ENCODE measurements at regions of chr12 and their contacts with region 1.

Region 1: GRCh38 chr12:106357549-106358395 is at the start of gene POLR3B:
- DNase-seq: peak; percentile 84 to 92
- H3K4me3 ChIP-seq: peak within 1 kb of the TSS; percentile 66
- H3K27ac ChIP-seq: peak within 1 kb of the TSS; percentile 95
- H3K4me1 ChIP-seq: peaks cover 30% of the 10 kb centered on the region
- H3K27me3 ChIP-seq: no peaks in the 10 kb centered on the region
- CTCF ChIP-seq: peak; percentile 88
- total RNA-seq, gene POLR3B: 8.4 and 12.9 TPM in 2 replicates

Region 2: GRCh38 chr12:106066051-106066705 is 291.6 kb before region 1 on chr12:
- CTCF ChIA-PET with region 1: no interaction called
- POLR2A ChIA-PET with region 1: no interaction called
- intact Hi-C with region 1: no loop called
- DNase-seq: no peak
- H3K4me3 ChIP-seq: no peak overlapping the region
- H3K27ac ChIP-seq: no peak overlapping the region
- H3K4me1 ChIP-seq: no peaks in the 10 kb centered on the region
- H3K27me3 ChIP-seq: no peaks in the 10 kb centered on the region
- CTCF ChIP-seq: no peak

Region 3: DNA sequence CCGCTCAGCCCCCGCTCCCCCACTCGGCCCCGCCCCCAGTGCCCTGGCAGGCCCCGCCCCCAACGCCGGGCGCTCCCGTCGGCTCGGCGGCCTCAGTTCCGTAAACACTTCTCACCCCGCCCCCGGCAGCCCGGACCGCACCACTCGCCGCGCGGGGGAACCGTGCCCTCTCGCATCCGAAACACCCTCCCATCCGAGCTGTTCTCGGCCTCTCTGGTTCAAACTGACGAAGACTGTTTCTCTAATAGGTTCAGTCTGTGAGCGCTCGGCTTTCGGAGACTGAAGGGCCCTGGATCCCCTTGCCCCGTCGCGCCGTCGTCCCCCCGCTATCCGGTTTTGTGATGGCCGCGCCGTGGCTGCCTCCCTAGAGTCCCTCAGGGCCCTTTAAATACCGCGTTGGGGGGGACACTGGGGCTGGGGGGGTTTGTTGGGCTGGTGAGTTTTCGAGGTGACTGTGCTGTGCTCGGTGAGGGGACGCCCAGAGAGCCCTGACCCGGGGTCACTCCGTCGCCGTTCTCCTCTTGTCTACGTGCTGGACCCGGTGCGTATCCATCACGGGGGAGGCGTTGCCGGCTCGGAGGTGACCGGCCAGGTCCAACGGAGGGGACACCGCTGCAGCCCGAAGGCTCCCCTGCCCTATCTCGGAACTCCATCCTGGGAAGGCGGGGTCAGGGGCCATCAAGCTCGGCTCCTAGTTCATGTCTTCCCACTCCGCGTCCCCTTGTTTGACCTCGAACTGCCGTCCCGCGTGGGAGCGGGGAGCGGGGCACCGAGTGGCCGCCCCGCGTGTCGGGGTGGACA is 55.2 kb before region 1 on chr12 and contains the start of gene TCP11L2:
- CTCF ChIA-PET with region 1: no interaction called
- POLR2A ChIA-PET with region 1: interaction called, 4 read pairs
- intact Hi-C with region 1: loop called (anchors 1 kb)
- DNase-seq: peak; percentile 59 to 79
- H3K4me3 ChIP-seq: peak within 1 kb of the TSS; percentile 99
- H3K27ac ChIP-seq: peak within 1 kb of the TSS; percentile 96
- H3K4me1 ChIP-seq: peaks cover 66% of the 10 kb centered on the region
- H3K27me3 ChIP-seq: no peaks in the 10 kb centered on the region
- CTCF ChIP-seq: no peak
- total RNA-seq, gene TCP11L2: 34.6 and 35.1 TPM in 2 replicates

Region 4: DNA sequence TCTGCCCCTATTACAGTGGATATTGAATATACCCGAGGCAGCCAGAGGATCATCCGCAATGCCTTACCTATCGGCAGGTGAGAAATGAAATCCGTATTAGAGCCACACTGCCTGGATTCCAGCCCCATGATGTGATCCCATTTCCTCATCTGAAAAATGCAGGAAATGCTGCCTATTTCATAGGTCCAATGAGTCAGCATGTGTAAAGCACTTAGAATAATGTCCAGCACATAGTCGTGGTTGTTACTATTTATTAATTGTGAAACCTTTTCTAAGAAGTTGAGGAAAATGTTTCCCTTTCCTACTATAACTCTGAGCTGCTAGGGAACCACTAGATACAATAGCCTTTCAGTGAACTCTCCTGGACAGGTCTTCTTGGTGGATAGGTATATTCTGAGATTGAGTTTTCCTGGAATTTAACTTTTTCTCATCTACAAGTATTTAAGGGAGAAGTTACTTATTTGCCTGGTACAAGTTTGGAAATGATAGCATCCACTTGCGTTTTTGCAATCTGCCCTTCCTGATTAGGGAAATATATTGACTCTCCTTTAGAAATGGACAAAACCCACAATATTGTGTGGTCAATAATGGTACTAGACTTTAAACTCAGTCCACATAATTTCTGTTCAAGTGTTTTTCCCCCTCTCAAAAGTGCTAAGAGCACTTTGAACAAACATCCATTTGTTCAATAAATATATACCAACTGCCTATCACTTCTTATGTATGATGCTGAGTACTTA is 12.0 kb after region 1 on chr12:
- CTCF ChIA-PET with region 1: no interaction called
- POLR2A ChIA-PET with region 1: no interaction called
- intact Hi-C with region 1: loop called (anchors 1 kb)
- DNase-seq: peak; percentile 42 to 97
- H3K4me3 ChIP-seq: peak overlapping the region; percentile 13; the same call in 1 of the 2 replicates
- H3K27ac ChIP-seq: peak overlapping the region; percentile 92
- H3K4me1 ChIP-seq: peaks cover 27% of the 10 kb centered on the region
- H3K27me3 ChIP-seq: no peaks in the 10 kb centered on the region
- CTCF ChIP-seq: no peak

Region 5: GRCh38 chr12:106919910-106920544 is 562.3 kb after region 1 on chr12:
- CTCF ChIA-PET with region 1: interaction called, 3 read pairs
- POLR2A ChIA-PET with region 1: no interaction called
- intact Hi-C with region 1: loop called (anchors 1 kb)
- DNase-seq: peak in 1 of 2 experiments; percentile 49
- H3K4me3 ChIP-seq: no peak overlapping the region
- H3K27ac ChIP-seq: no peak overlapping the region
- H3K4me1 ChIP-seq: no peaks in the 10 kb centered on the region
- H3K27me3 ChIP-seq: no peaks in the 10 kb centered on the region
- CTCF ChIP-seq: peak; percentile 90